ENCODE measurements at regions of chr16 and their contacts with region 1.

Region 1: GRCh38 chr16:23803591-23804123 is 32.1 kb upstream of the PRKCB start:
- DNase-seq: peak; percentile 60
- H3K4me3 Mint-ChIP-seq: no peak overlapping the region
- H3K27ac Mint-ChIP-seq: peak overlapping the region; percentile 11
- H3K4me1 Mint-ChIP-seq: peaks cover 12% of the 10 kb centered on the region
- H3K27me3 Mint-ChIP-seq: peaks cover 6% of the 10 kb centered on the region

Region 2: GRCh38 chr16:23826528-23827045 is 22.9 kb after region 1 on chr16:
- intact Hi-C with region 1: loop called (anchors 1 kb)
- DNase-seq: no peak
- H3K4me3 Mint-ChIP-seq: peak overlapping the region; percentile 10
- H3K27ac Mint-ChIP-seq: peak overlapping the region; percentile 13
- H3K4me1 Mint-ChIP-seq: peaks cover 40% of the 10 kb centered on the region
- H3K27me3 Mint-ChIP-seq: no peaks in the 10 kb centered on the region

Region 3: GRCh38 chr16:23863511-23864422 is 60.1 kb after region 1 on chr16:
- intact Hi-C with region 1: loop called (anchors 5 kb)
- DNase-seq: peak; percentile 30
- H3K4me3 Mint-ChIP-seq: peak overlapping the region; percentile 79
- H3K27ac Mint-ChIP-seq: peak overlapping the region; percentile 92
- H3K4me1 Mint-ChIP-seq: peaks cover 73% of the 10 kb centered on the region
- H3K27me3 Mint-ChIP-seq: no peaks in the 10 kb centered on the region

Region 4: DNA sequence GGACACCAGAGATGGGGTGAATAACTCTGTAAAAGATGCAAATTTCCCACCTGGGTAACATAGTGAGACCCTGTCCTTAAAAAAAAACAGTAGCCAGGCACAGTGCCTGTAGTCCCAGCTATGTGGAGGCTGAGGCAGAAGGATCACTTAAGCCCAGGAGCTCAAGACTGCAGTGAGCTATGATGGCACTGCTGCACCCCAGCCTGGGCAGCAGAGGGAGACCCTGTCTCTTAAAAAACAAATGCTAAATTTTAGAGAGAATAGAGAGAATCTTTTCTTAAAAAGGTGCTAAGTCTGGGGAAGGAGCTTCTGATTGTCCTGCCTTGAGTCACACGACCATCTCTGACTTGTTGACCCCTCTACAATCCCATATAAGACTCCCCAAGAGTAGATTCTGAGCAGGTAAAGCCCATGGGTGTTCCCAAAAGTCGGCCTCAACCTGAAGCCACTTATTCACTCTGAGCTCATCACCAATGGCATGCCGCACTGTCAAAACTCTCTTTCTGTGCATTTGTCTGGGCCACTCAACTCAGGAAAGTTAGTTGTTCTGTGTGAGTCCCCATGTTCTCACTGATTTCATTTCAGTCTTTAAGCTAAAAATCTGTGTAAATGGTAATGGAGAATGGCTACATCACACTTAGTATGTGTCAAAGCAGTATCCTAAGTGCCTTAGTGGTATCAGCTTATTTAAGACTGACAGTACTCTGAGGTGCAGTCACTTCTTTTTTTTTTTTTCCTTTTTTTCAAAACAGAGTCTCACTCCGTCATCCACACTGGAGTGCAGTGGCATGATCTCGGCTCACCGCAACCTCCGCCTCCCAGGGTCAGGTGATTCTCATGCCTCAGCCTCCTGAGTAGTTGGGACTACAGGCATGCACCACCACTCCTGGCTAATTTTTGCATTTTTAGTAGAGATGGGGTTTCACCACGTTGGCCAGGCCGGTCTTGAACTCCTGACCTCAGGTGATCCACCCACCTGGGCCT is 73.7 kb after region 1 on chr16:
- intact Hi-C with region 1: no loop called
- DNase-seq: no peak
- H3K4me3 Mint-ChIP-seq: no peak overlapping the region
- H3K27ac Mint-ChIP-seq: no peak overlapping the region
- H3K4me1 Mint-ChIP-seq: peaks cover 62% of the 10 kb centered on the region
- H3K27me3 Mint-ChIP-seq: no peaks in the 10 kb centered on the region

Region 5: DNA sequence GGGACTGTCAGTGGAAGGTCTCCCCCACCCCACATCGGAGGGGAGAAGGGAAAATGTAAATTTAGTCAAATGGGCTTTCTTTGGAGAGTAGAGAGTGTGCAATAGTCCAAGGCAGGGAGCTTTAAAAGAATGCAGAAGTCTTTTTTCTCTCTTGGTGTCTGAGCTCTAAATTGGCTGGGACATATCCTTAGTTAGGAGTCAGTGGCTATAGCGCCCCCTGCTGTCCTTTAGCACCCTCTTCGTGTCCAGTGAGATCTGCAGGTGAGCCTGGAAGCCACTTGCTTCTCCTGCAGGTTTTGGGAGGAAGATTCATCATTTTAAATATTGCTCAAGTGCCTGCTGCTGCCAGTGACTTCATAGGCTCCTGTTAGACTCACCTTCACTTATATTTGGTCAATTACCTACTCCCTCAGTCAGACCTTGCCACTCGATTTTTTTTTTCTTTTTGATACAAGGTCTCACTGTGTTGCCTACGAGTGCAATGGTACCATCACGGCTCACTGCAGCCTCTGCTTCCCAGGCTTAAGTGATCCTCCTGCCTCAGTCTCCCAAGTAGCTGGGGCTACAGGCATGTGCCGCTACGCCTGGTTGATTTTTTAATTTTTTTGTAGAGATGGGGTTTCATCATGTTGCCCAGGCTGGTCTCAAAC is 206.9 kb after region 1 on chr16:
- intact Hi-C with region 1: loop called (anchors 1 kb)
- DNase-seq: peak; percentile 61
- H3K4me3 Mint-ChIP-seq: no peak overlapping the region
- H3K27ac Mint-ChIP-seq: no peak overlapping the region
- H3K4me1 Mint-ChIP-seq: peaks cover 27% of the 10 kb centered on the region
- H3K27me3 Mint-ChIP-seq: no peaks in the 10 kb centered on the region

Region 6: DNA sequence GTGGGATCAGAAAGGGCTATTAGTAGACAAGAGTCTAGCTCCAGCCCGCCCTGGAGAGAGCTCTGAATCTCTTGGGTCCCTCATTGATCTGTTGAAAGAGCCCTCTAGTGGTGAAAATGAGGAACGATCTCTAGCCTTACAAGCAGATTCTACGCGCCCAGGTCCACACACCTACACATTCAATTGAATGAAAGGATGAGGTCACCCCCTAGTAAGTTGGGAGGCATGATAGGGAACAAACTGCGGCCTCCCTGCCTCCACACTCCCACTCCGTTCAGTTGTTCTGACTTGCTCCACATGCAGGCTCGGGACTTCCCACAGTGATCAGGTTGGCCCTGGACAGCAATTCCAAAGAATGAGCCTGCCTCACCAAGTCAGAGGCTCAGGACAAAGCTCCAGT is 449.5 kb after region 1 on chr16:
- intact Hi-C with region 1: loop called (anchors 10 kb)
- DNase-seq: peak; percentile 12
- H3K4me3 Mint-ChIP-seq: no peak overlapping the region
- H3K27ac Mint-ChIP-seq: no peak overlapping the region
- H3K4me1 Mint-ChIP-seq: peaks cover 4% of the 10 kb centered on the region
- H3K27me3 Mint-ChIP-seq: peaks cover 40% of the 10 kb centered on the region